Sigmoid colon (tissue), 7 donors: ENCODE measurements at regions of chr6 and their contacts with region 1.

Region 1: GRCh38 chr6:50816115-50816675 is 2.5 kb upstream of the TFAP2B start:
- DNase-seq: peak; percentile 69
- H3K4me3 ChIP-seq: peak overlapping the region; percentile 5 to 40 (median 31)
- H3K27ac ChIP-seq: no peak overlapping the region
- H3K4me1 ChIP-seq: peaks cover 0 to 20% (median 18%) of the 10 kb centered on the region in 4 donors
- H3K27me3 ChIP-seq: peaks cover 28 to 88% (median 48%) of the 10 kb centered on the region in 3 donors
- CTCF ChIP-seq: peak; percentile 45 to 73 (median 72)
- EP300 ChIP-seq: no peak
- POLR2A ChIP-seq: no peak

Region 2: DNA sequence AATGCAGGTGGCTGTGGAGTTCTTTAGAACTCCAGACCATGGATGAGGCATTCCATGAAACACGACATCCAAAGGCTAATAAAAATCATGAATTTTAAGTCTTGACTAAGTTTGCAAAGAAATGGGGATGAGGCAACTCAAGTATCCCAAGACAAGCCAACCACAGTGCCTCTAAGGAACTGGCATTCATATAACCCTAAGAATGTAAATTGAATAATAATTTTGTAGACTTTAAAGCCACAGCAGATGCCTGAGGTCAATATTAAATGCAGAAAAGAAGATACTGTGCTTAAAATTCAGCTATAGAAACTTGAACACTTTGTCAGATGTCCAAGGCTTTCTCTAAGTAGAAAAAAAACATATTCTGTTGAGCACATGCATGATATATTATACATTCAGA is 57.0 kb after region 1 on chr6:
- intact Hi-C with region 1: no loop called
- DNase-seq: no peak
- H3K4me3 ChIP-seq: no peak overlapping the region
- H3K27ac ChIP-seq: no peak overlapping the region
- H3K4me1 ChIP-seq: no peaks in the 10 kb centered on the region
- H3K27me3 ChIP-seq: no peaks in the 10 kb centered on the region
- CTCF ChIP-seq: no peak
- EP300 ChIP-seq: no peak
- POLR2A ChIP-seq: no peak

Region 3: DNA sequence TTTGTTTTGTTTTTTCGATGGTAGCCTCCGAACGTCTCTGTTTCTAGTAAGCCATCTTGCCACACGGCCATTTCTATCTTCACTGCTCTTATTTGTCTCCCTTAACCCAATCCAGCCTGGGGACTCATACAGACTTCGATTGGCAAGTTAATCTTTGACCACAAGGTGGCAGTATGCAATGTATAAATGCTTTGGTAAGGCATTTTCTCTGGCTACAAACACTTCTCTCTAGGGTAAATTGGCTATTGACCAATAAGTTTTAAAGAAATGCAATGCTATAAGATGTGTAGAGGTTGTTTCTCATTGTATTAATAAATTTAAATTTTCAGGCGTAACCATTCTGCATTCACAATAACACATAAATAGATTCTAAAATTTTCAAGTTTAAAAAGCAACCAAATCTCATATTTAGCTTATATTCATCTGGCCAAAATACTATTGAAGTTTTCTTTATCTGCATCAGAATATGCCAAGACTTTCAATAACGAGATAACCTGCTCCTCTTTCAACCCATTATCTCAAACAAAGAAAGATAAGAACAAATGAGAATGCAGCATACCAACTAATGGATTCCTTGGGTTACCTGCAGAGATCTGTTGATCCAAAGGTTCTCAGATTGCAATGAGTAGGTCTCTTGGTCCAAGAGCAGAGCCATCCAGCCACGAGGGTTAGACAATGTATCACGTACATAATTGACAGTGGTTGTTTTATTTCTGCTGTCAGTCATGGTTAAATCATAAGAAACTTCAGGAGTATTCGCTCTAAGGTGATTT is 1039.3 kb after region 1 on chr6:
- intact Hi-C with region 1: loop called (anchors 10 kb)
- DNase-seq: no peak
- H3K4me3 ChIP-seq: no peak overlapping the region
- H3K27ac ChIP-seq: no peak overlapping the region
- H3K4me1 ChIP-seq: no peaks in the 10 kb centered on the region
- H3K27me3 ChIP-seq: no peaks in the 10 kb centered on the region
- CTCF ChIP-seq: peak; percentile 34 to 66 (median 38)
- EP300 ChIP-seq: no peak
- POLR2A ChIP-seq: no peak

Region 4: DNA sequence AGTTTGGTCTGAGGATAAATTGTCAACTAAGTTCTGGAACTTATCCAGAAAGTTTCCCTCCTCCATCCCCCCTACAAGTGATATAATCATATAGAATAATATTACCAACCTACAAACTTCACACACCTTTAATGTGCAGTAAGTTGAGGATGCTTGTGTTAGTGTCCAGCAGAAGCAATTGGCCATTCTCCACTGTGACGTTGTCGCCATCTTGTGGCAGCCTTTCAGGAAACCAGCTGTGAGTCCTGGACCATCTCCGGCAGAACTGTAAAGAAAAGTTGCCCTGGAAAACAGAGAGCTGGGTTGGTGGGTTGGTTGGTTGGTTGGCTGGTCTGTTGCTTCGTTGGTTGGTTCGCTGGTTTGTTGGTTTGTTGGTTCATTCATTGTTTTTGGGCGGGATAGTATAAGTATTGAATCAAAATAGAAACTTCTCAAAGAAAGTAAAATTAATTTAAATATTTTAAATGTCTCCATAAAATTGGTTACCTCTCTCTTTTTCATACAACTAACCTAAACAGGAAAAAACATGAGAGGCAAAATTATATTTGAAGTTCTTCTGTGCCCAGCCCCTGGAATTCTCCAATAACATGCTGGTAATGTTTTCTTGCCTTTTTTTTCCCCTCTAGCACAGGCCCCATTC is 1143.7 kb after region 1 on chr6:
- intact Hi-C with region 1: loop called (anchors 2 kb)
- DNase-seq: peak; percentile 70
- H3K4me3 ChIP-seq: no peak overlapping the region
- H3K27ac ChIP-seq: peak overlapping the region in 1 of 4 donors; percentile 32
- H3K4me1 ChIP-seq: peaks cover 0 to 13% (median 3%) of the 10 kb centered on the region in 4 donors
- H3K27me3 ChIP-seq: no peaks in the 10 kb centered on the region
- CTCF ChIP-seq: peak; percentile 5 to 63 (median 40)
- EP300 ChIP-seq: no peak
- POLR2A ChIP-seq: no peak

Region 5: DNA sequence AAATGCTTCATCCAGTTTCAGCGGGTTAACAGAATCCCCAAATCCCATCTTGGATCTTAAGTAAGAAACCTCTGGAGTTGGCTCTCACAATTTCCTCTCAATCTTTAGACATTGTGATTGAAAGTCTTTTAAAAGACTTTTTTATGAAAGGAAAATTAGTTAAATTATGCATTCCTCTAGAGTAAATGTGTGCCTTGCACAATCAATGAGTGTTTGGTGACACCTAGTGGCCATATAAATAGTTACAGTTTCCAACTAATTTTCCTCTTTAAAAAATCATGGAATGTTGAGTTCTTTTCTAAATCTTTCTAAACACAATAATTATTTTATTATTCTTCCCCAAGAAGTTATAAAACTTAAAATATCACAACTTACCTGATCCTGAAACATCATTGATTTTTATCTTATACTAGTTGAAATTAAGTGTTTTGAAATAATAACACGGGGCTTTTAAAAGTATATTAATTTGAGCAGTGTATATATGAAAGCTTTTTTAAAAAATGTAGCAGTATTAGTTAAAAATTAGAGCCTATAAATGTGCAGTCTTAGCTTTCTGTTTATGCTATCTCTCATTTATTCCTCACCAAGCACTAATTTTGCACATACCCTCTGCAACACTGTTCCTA is 1204.9 kb after region 1 on chr6:
- intact Hi-C with region 1: loop called (anchors 2 kb)
- DNase-seq: no peak
- H3K4me3 ChIP-seq: no peak overlapping the region
- H3K27ac ChIP-seq: no peak overlapping the region
- H3K4me1 ChIP-seq: peaks cover 0 to 26% (median 10%) of the 10 kb centered on the region in 4 donors
- H3K27me3 ChIP-seq: no peaks in the 10 kb centered on the region
- CTCF ChIP-seq: peak; percentile 53 to 84 (median 60)
- EP300 ChIP-seq: no peak
- POLR2A ChIP-seq: no peak

Region 6: GRCh38 chr6:52049252-52050050 is 1233.3 kb after region 1 on chr6:
- intact Hi-C with region 1: loop called (anchors 2 kb)
- DNase-seq: no peak
- H3K4me3 ChIP-seq: no peak overlapping the region
- H3K27ac ChIP-seq: no peak overlapping the region
- H3K4me1 ChIP-seq: peaks cover 0 to 13% (median 9%) of the 10 kb centered on the region in 4 donors
- H3K27me3 ChIP-seq: no peaks in the 10 kb centered on the region
- CTCF ChIP-seq: peak; percentile 33 to 64 (median 39)
- EP300 ChIP-seq: no peak
- POLR2A ChIP-seq: no peak

Region 7: GRCh38 chr6:52263709-52264540 is 1447.7 kb after region 1 on chr6:
- intact Hi-C with region 1: loop called (anchors 5 kb)
- DNase-seq: no peak
- H3K4me3 ChIP-seq: no peak overlapping the region
- H3K27ac ChIP-seq: no peak overlapping the region
- H3K4me1 ChIP-seq: peaks cover 0 to 15% (median 5%) of the 10 kb centered on the region in 4 donors
- H3K27me3 ChIP-seq: no peaks in the 10 kb centered on the region
- CTCF ChIP-seq: peak; percentile 30 to 89 (median 64)
- EP300 ChIP-seq: no peak
- POLR2A ChIP-seq: no peak